ENCODE measurements at regions of chr12 and their contacts with region 1.

Region 1: DNA sequence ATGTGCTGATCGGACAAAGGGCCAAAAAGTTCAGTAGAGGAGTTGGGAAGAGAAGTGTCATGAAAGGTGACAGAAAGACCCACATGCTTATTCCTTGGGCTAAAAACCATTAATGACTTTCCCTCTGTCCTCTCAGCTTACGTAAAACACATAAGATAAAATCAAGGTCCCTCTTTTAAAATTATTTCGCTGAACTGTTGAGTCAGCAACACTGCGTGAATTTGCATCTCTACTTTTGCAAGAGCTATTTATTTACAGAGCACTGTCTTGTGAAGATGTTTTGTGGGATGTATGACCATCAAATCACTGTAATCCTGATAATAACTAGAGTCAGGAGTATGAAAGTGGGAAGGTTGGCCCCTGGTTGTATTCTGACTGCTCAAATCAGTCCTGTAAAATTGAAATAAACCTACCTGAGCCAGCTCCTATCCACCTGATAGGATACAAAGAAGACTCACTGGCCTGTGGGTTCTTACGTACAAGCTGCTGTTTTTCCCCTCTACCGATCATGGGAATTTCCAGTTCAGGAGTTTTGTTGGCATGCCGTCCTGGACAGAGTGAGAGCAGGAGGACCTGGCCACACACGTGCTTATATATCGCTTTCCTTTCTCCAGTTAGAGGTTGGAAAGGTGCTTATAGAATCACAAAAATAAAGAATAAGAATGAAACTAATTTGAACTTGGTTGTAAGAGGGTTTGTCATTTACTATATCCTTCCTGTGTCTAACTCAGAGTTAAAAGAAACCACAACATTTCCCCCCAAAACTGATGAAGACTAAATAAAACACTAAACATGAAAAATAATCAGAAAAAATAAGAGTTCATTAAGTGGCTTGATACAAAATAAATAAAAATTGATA is 42.9 kb downstream of the IFNG-AS1 start:
- DNase-seq: no peak

Region 2: GRCh38 chr12:68200854-68201253 is 168.7 kb after region 1 on chr12:
- intact Hi-C with region 1: no loop called
- DNase-seq: no peak

Region 3: GRCh38 chr12:68919581-68920239 is 887.6 kb after region 1 on chr12:
- intact Hi-C with region 1: loop called in 1 of 2 experiments (anchors 10 kb)
- DNase-seq: no peak